GM10248 (cell line): ENCODE measurements at regions of chr18 and their contacts with region 1.

Region 1: GRCh38 chr18:50218432-50219197 is 23.7 kb upstream of the MYO5B start:
- DNase-seq: peak; percentile 59
- CTCF ChIP-seq: peak; percentile 39

Region 2: GRCh38 chr18:50187659-50188058 is 31.0 kb before region 1 on chr18:
- CTCF ChIA-PET with region 1: no interaction called
- POLR2A ChIA-PET with region 1: no interaction called
- DNase-seq: no peak
- CTCF ChIP-seq: no peak

Region 3: DNA sequence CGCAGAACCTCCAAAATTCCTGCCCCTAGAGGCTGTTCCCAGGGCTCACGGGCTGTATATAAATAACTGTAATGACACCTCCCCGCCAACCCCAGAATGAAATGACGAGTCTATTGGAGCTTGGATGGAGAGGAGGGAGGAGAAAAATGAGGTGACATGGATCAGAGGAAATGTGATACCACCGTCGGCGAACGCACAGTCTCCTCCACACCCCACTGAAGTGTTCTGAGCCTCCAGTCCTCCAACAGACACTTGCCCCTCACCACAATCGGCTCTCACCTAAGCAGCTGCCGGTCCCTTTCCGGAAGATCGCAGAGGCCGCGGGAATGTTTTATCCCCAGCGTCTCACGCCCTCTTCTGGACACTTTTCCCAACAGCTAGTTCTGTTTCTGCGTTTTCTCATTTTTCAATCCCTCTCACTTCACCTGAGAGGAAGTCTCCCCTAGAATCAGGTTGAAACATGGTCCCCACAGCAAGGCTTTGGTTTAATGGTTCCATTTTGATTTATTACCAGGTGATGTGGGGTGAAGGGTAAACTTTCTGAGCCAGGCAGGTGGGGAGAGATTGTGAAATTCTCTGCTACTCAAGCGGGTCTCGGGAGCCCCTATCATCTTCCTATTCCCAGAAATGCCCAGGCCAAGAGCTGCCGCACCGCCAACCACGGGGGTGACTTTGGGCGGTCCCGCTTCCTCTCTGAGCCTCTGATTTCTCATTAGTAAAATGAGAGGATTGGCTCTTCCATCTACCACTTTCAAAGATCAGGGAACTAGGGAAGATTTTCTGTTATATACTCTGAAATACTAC is 14.6 kb before region 1 on chr18:
- CTCF ChIA-PET with region 1: interaction called, 20 read pairs
- POLR2A ChIA-PET with region 1: no interaction called
- DNase-seq: peak; percentile 51
- CTCF ChIP-seq: peak; percentile 46